CD4-positive, alpha-beta memory T cell (primary cell): ENCODE measurements at regions of chr3 and their contacts with region 1.

Region 1: DNA sequence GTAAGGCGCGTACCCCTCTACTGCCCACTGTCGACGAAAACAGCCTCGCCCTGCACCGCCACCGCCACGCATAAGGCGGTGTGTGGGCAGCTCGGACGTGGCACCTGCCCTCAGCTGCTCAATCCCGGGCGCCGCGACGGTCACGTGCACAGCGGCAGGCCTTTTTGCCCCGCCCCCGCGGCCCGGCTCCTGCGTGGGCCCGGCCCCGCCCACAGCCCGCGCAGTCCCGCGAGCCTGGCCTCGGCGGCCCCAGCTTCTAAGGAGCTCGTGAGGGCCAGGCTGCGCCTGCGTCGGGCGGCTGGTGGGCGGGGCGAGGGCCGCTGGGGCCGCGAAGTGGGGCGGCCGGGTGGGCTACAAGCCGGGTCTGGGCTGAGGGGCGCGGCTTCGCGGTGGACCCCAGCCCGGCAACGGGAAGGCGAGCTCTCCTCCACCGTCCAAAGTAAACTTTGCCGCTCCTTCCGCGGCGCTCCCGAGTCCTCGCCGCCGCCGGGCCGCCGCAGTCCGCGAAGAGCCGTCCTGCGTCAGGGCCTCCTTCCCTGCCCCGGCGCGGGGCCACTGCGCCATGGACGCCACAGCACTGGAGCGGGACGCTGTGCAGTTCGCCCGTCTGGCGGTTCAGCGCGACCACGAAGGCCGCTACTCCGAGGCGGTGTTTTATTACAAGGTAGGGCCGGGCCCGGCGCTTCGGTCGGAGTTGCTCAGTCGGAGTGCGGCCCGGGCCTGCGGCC is at the start of gene CAPN7:
- DNase-seq: peak; percentile 92 to 95 (median 94)
- H3K4me3 ChIP-seq: peak within 1 kb of the TSS; percentile 70 to 83
- H3K4me3 Mint-ChIP-seq: peak within 1 kb of the TSS; percentile 91 to 96 (median 92)
- H3K27ac ChIP-seq: peak within 1 kb of the TSS; percentile 88
- H3K27ac Mint-ChIP-seq: peak within 1 kb of the TSS; percentile 77 to 97 (median 95)
- H3K4me1 ChIP-seq: peaks cover 46% of the 10 kb centered on the region
- H3K4me1 Mint-ChIP-seq: peaks cover 18 to 43% (median 29%) of the 10 kb centered on the region in 4 donors
- H3K27me3 ChIP-seq: no peaks in the 10 kb centered on the region
- H3K27me3 Mint-ChIP-seq: no peaks in the 10 kb centered on the region
- total RNA-seq, gene CAPN7: 95.5 to 103 TPM

Region 2: DNA sequence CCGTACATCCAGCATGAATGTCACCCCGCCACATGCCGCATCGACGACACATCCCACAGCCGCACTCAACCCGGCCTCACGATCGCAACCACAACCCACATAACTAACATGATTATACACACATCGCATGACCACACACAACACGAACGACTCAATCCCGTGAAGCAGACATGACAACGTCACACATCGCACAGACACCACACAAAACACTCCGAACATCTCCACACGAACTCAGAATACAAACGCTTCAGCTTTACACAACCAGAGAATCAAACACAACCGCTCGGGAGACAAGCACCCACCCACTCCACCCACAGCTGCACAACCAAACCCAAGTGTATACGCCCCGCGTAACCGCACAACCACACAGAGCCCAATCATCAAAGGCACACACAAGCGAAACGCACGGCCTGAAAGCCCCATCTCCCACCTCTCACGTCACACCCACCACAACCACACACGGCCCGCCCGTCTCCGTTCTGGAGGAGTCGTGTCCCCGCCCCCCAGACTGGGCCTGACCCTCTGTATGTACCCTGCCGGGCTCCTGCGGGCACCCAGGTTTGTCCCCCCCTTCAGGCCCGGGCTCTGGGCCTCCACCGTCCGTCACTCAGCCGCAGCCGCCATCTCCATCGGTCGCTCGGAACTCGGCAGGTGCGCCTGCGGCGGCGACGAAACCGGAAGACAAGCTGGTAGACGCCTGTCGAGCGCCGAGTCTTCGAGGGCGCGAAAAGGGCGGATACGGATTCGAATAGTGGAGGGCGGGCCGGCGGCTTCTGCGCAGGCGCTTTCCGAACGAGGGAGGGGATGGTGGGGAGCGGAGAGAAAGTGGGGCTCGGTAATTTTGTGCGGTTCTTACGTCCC is 107.4 kb before region 1 on chr3 and contains the start of gene RBSN:
- CTCF ChIA-PET with region 1: interaction called, 4 read pairs
- POLR2A ChIA-PET with region 1: interaction called, 10 read pairs
- intact Hi-C with region 1: loop called (anchors 1 kb)
- DNase-seq: peak; percentile 96 to 98 (median 96)
- H3K4me3 ChIP-seq: peak within 1 kb of the TSS; percentile 61 to 73
- H3K4me3 Mint-ChIP-seq: peak within 1 kb of the TSS; percentile 88 to 99 (median 96)
- H3K27ac ChIP-seq: peak within 1 kb of the TSS; percentile 95
- H3K27ac Mint-ChIP-seq: peak within 1 kb of the TSS; percentile 89 to 99 (median 99)
- H3K4me1 ChIP-seq: peaks cover 22% of the 10 kb centered on the region
- H3K4me1 Mint-ChIP-seq: peaks cover 19 to 35% (median 27%) of the 10 kb centered on the region in 4 donors
- H3K27me3 ChIP-seq: no peaks in the 10 kb centered on the region
- H3K27me3 Mint-ChIP-seq: peaks cover 1 to 2% of the 10 kb centered on the region in 2 donors
- total RNA-seq, gene RBSN: 33.2 to 34.7 TPM

Region 3: GRCh38 chr3:15223685-15224572 is 17.8 kb after region 1 on chr3:
- CTCF ChIA-PET with region 1: interaction called, 6 read pairs
- POLR2A ChIA-PET with region 1: interaction called, 14 read pairs
- intact Hi-C with region 1: loop called (anchors 2 kb)
- DNase-seq: no peak
- H3K4me3 ChIP-seq: no peak overlapping the region
- H3K4me3 Mint-ChIP-seq: no peak overlapping the region
- H3K27ac ChIP-seq: no peak overlapping the region
- H3K27ac Mint-ChIP-seq: peak overlapping the region in 2 of 7 donors; percentile 19 to 72
- H3K4me1 ChIP-seq: no peaks in the 10 kb centered on the region
- H3K4me1 Mint-ChIP-seq: peaks cover 1 to 12% (median 7%) of the 10 kb centered on the region in 4 donors
- H3K27me3 ChIP-seq: no peaks in the 10 kb centered on the region
- H3K27me3 Mint-ChIP-seq: no peaks in the 10 kb centered on the region

Region 4: DNA sequence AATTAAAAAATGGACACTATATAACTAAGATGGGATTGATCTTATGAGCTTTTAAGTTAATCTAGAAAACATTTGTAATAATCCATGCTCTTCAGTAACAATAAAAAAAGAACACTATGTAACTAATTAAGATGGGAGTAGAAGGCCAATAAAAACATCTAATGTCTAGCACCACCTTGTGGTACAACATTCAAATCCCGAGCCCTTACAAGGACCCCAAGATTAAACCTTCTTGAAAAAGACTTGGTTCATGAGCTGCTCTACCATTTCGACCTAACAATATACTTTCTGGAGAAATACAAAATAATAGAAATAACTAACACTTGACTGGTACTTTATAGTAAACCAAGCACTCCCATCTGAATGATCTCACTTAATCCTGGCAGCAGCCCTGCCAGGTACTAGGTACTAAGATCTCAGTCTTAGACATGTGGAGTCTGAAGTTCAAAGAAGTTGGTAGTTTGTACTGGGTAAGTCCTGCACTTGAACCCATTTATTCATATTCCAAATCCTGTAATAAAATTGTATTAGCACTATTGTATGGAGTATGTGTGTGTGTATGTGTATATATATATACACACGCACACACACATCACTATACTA is 199.5 kb after region 1 on chr3:
- CTCF ChIA-PET with region 1: interaction called, 135 read pairs
- POLR2A ChIA-PET with region 1: interaction called, 13 read pairs
- intact Hi-C with region 1: loop called (anchors 1 kb)
- DNase-seq: peak; percentile 49 to 61 (median 55)
- H3K4me3 ChIP-seq: no peak overlapping the region
- H3K4me3 Mint-ChIP-seq: no peak overlapping the region
- H3K27ac ChIP-seq: no peak overlapping the region
- H3K27ac Mint-ChIP-seq: peak overlapping the region in 4 of 7 donors; percentile 8 to 40 (median 24)
- H3K4me1 ChIP-seq: peaks cover 3% of the 10 kb centered on the region
- H3K4me1 Mint-ChIP-seq: peaks cover 7 to 22% (median 14%) of the 10 kb centered on the region in 4 donors
- H3K27me3 ChIP-seq: no peaks in the 10 kb centered on the region
- H3K27me3 Mint-ChIP-seq: no peaks in the 10 kb centered on the region

Region 5: GRCh38 chr3:15601397-15602145 is 395.5 kb after region 1 on chr3 and contains the starts of genes BTD and HACL1:
- CTCF ChIA-PET with region 1: interaction called, 4 read pairs
- POLR2A ChIA-PET with region 1: interaction called, 16 read pairs
- intact Hi-C with region 1: loop called (anchors 1 kb)
- DNase-seq: peak; percentile 98 to 100 (median 99)
- H3K4me3 ChIP-seq: peak within 1 kb of the TSS; percentile 65 to 100
- H3K4me3 Mint-ChIP-seq: peak within 1 kb of the TSS; percentile 97 to 100 (median 100)
- H3K27ac ChIP-seq: peak within 1 kb of the TSS; percentile 83
- H3K27ac Mint-ChIP-seq: peak within 1 kb of the TSS; percentile 94 to 100 (median 99)
- H3K4me1 ChIP-seq: peaks cover 37% of the 10 kb centered on the region
- H3K4me1 Mint-ChIP-seq: peaks cover 32 to 70% (median 50%) of the 10 kb centered on the region in 4 donors
- H3K27me3 ChIP-seq: no peaks in the 10 kb centered on the region
- H3K27me3 Mint-ChIP-seq: no peaks in the 10 kb centered on the region
- total RNA-seq, gene BTD: 23.5 to 27.4 TPM
- total RNA-seq, gene HACL1: 37.6 to 44.4 TPM